ENCODE measurements at regions of chr14 and their contacts with region 1.

Region 1: GRCh38 chr14:93939304-93940229 is 12.4 kb downstream of the FAM181A start:
- DNase-seq: peak; percentile 98
- H3K4me3 Mint-ChIP-seq: peak overlapping the region; percentile 69
- H3K27ac Mint-ChIP-seq: peak overlapping the region; percentile 79
- H3K4me1 Mint-ChIP-seq: peaks cover 23% of the 10 kb centered on the region
- H3K27me3 Mint-ChIP-seq: no peaks in the 10 kb centered on the region

Region 2: DNA sequence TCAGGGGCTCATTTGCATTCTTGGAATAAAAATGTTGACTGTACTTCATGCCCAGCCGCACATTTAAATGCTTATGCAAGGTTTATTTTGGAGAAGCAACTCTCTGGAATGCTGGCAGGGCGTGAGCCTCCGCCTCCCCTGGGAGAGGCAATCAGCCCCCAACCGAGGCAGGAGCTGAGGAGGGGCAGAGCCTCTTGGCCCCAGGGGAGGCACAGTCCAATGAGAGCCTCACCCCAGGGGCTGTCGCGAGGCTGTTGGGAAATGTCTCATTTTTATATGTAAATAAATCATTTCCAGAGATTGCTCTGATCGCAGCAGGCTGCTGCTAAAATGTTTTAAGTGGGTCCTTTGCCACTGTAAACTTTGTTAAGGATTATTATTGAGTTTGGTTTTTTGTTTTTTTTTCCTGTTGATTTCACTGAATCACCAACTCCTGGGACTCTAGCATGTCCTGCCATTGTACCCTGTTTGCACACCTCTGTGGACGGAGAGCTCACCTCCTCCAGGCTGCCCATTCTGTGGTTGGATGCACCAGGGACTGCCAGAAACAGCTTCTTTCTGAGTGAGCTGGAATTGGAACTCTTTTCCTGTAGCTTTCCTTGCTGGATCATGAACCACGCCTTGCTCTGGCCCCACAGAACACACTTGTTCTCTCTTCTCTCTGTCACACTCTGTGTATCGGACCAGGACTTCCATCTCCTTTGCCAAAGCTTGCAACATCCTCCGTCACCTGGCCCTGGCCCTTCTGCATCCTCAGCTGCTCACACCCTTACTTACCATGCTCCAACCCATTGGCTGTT is 59.3 kb before region 1 on chr14:
- intact Hi-C with region 1: no loop called
- DNase-seq: no peak
- H3K4me3 Mint-ChIP-seq: no peak overlapping the region
- H3K27ac Mint-ChIP-seq: no peak overlapping the region
- H3K4me1 Mint-ChIP-seq: peaks cover 5% of the 10 kb centered on the region
- H3K27me3 Mint-ChIP-seq: peaks cover 8% of the 10 kb centered on the region

Region 3: DNA sequence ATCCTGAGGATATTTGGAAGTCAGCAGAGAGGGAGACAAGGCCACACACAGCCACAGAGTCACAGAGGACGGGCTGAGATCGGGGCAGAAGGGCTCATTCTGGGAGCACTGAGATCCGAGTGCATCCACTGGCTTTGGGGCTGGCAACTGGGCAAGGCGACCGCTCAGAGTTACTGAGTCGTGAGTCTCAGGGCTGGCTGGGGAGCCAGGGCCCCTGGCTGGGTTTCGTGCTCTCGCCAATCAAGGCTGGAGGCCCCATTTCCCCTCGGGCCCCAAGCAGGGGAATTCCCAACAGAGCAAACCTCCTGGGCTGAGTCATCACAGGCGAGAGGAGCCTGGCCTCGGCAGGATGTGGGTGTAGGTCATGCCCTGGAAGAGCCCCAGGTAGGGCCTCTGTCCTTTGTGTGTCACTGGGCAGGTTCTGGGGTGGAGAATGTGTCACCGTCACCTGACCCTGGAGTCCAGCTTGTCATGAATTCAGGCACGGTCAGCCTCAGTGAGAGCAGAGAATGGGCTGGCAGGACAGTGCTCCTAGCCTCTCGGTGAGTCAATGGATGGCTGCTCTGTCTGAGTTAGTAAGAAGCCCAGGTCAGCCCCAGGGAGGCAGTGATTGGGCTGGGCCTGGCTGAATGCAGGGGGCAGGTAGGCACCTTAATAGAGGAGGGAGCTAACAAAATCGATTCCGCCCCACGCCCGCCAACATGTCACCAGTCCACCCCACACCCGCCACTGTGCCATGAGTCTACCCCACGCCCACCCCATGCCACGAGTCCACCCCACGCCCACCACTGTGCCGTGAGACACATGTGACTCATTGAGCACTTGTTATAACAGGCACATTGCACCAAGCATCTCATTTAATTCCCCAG is 19.9 kb after region 1 on chr14:
- intact Hi-C with region 1: loop called (anchors 1 kb)
- DNase-seq: peak; percentile 98
- H3K4me3 Mint-ChIP-seq: peak overlapping the region; percentile 86
- H3K27ac Mint-ChIP-seq: peak overlapping the region; percentile 100
- H3K4me1 Mint-ChIP-seq: peaks cover 93% of the 10 kb centered on the region
- H3K27me3 Mint-ChIP-seq: no peaks in the 10 kb centered on the region

Region 4: GRCh38 chr14:93975791-93976476 is 36.4 kb after region 1 on chr14:
- intact Hi-C with region 1: loop called (anchors 1 kb)
- DNase-seq: peak; percentile 86
- H3K4me3 Mint-ChIP-seq: peak overlapping the region; percentile 81
- H3K27ac Mint-ChIP-seq: peak overlapping the region; percentile 98
- H3K4me1 Mint-ChIP-seq: peaks cover 78% of the 10 kb centered on the region
- H3K27me3 Mint-ChIP-seq: peaks cover 1% of the 10 kb centered on the region

Region 5: GRCh38 chr14:94136575-94137331 is 197.2 kb after region 1 on chr14:
- intact Hi-C with region 1: loop called (anchors 1 kb)
- DNase-seq: peak; percentile 96
- H3K4me3 Mint-ChIP-seq: no peak overlapping the region
- H3K27ac Mint-ChIP-seq: no peak overlapping the region
- H3K4me1 Mint-ChIP-seq: peaks cover 7% of the 10 kb centered on the region
- H3K27me3 Mint-ChIP-seq: peaks cover 38% of the 10 kb centered on the region

Measured in activated CD4-positive, alpha-beta T cell treated with anti-CD3 and anti-CD28 coated beads, Interleukin-2, amount 10 ng/mL, durations not matched to agents 24 days and 14 days (primary cell).